Mammary epithelial cell (primary cell): ENCODE measurements at regions of chr4 and their contacts with region 1.

Region 1: GRCh38 chr4:19508442-19508841 is 743.3 kb upstream of the SLIT2 start:
- DNase-seq: peak; percentile 1
- H3K4me3 ChIP-seq: no peak overlapping the region
- H3K27ac ChIP-seq: no peak overlapping the region
- H3K4me1 ChIP-seq: no peaks in the 10 kb centered on the region
- H3K27me3 ChIP-seq: no peaks in the 10 kb centered on the region
- CTCF ChIP-seq: no peak

Region 2: DNA sequence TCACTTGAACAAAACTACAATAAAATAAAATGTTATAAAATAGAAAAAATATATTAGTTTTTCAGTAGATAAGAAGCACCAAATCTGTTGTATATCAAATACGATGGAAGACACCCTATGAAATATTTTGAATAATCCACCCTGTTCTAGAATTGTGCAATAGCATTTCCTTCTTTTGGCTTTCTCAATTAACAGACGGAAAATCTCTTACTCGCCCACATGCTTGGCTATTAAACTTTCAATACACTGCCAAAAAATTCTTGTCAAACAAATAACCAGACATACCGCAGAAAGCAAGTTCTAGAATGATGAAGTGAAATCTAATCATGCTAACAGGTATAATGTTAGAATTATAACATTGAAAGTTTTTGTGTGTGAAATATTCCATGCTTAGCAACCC is 71.7 kb after region 1 on chr4:
- CTCF ChIA-PET with region 1: no interaction called
- dilution Hi-C with region 1: no loop called
- in situ Hi-C with region 1: no loop called
- intact Hi-C with region 1: no loop called
- DNase-seq: peak; percentile 2
- H3K4me3 ChIP-seq: no peak overlapping the region
- H3K27ac ChIP-seq: no peak overlapping the region
- H3K4me1 ChIP-seq: no peaks in the 10 kb centered on the region
- H3K27me3 ChIP-seq: no peaks in the 10 kb centered on the region
- CTCF ChIP-seq: no peak

Region 3: GRCh38 chr4:19675172-19675811 is 166.8 kb after region 1 on chr4:
- CTCF ChIA-PET with region 1: no interaction called
- dilution Hi-C with region 1: loop called (anchors 10 kb)
- in situ Hi-C with region 1: no loop called
- intact Hi-C with region 1: no loop called
- DNase-seq: no peak
- H3K4me3 ChIP-seq: no peak overlapping the region
- H3K27ac ChIP-seq: no peak overlapping the region
- H3K4me1 ChIP-seq: no peaks in the 10 kb centered on the region
- H3K27me3 ChIP-seq: no peaks in the 10 kb centered on the region
- CTCF ChIP-seq: no peak